Psoas muscle (tissue), 8 donors: ENCODE measurements at regions of chr5 and their contacts with region 1.

Region 1: DNA sequence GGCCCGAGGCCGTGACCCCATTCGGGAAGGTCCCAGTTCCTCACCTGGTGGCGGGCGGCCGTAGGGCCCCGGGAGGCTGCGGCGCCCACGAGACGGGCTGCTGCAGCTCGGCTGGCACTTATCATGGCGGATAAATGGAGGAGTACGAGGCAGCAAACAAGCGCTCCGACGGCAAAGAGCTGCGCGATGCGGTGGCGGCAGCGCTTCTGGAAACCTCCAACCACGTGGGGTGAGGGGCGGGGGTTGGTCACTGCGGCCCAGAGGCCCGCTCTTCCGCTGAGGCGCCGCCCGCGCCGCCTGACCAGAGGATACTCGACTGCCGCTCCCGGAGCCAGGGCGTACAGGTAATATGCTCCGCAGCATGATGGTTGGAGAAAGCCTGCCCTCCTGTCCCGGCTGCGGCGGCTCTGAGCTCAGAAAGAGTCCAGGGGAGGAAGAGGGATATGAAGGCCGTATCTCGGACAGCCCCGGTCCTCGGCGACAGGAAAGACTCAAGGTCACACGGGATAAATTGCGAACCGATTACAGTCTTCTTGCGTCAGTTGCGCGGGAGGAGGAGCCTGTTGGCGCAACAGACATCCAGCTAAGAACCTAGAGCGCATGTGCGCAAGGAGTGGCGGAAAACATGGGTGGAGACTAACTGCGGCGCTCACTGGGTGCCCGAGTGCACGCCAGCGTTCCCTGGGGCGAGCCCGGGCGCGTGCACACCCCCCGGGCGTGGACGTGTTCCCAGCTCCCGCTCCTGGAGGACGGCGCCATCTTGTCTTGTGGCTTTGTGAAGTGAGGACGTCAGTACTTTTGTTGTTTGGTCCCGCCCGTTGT is at the start of gene HSPA9:
- DNase-seq: peak; percentile 98 to 99
- ATAC-seq: peak; percentile 92 to 96 (median 94)
- H3K4me3 ChIP-seq: peak within 1 kb of the TSS; percentile 89
- H3K27ac ChIP-seq: peak within 1 kb of the TSS; percentile 98
- H3K4me1 ChIP-seq: peaks cover 23% of the 10 kb centered on the region
- H3K27me3 ChIP-seq: no peaks in the 10 kb centered on the region
- CTCF ChIP-seq: peak; percentile 17
- total RNA-seq, gene HSPA9: 321 to 498 (median 441) TPM

Region 2: GRCh38 chr5:139268364-139269202 is 693.2 kb after region 1 on chr5:
- intact Hi-C with region 1: loop called (anchors 5 kb)
- DNase-seq: no peak
- ATAC-seq: no peak
- H3K4me3 ChIP-seq: peak overlapping the region; percentile 23
- H3K27ac ChIP-seq: peak overlapping the region; percentile 94
- H3K4me1 ChIP-seq: peaks cover 45% of the 10 kb centered on the region
- H3K27me3 ChIP-seq: no peaks in the 10 kb centered on the region
- CTCF ChIP-seq: no peak

Region 3: DNA sequence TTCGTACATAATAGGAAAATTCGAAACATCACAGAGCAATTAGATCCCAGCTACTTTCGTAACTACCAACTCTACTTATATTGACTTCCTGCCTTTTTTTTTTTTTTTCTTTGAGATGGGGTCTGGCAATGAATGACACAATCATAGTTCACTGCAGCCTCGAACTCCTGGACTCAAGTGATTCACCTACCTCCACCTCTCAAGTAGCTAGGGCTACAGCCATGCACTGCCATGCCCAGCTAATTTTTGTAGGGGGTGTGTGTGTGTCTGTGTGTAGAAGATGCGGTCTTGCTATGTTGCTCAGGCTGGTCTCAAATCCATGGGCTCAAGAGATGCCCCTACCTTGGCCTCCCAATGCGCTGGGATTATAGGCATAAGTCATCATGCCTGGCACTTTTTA is 760.4 kb after region 1 on chr5:
- intact Hi-C with region 1: loop called in 1 of 2 experiments (anchors 10 kb)
- DNase-seq: no peak
- ATAC-seq: peak in 1 of 4 donors; percentile 34
- H3K4me3 ChIP-seq: no peak overlapping the region
- H3K27ac ChIP-seq: no peak overlapping the region
- H3K4me1 ChIP-seq: no peaks in the 10 kb centered on the region
- H3K27me3 ChIP-seq: no peaks in the 10 kb centered on the region
- CTCF ChIP-seq: no peak